AG04449 (cell line): ENCODE measurements at regions of chr7 and their contacts with region 1.

Region 1: GRCh38 chr7:151631968-151632749 is 112.5 kb upstream of the RHEB start:
- DNase-seq: no peak
- H3K4me3 ChIP-seq: peak overlapping the region; percentile 85
- CTCF ChIP-seq: peak; percentile 41

Region 2: GRCh38 chr7:151137076-151137675 is 495.0 kb before region 1 on chr7:
- CTCF ChIA-PET with region 1: no interaction called
- POLR2A ChIA-PET with region 1: no interaction called
- DNase-seq: no peak
- H3K4me3 ChIP-seq: no peak overlapping the region
- CTCF ChIP-seq: no peak

Region 3: GRCh38 chr7:151551820-151552219 is 80.3 kb before region 1 on chr7:
- CTCF ChIA-PET with region 1: no interaction called
- POLR2A ChIA-PET with region 1: no interaction called
- DNase-seq: no peak
- H3K4me3 ChIP-seq: no peak overlapping the region
- CTCF ChIP-seq: no peak

Region 4: GRCh38 chr7:151599401-151600227 is 32.5 kb before region 1 on chr7:
- CTCF ChIA-PET with region 1: interaction called, 22 read pairs
- POLR2A ChIA-PET with region 1: no interaction called
- DNase-seq: peak; percentile 80
- H3K4me3 ChIP-seq: peak overlapping the region; percentile 7; the same call in 1 of the 2 replicates
- CTCF ChIP-seq: no peak

Region 5: DNA sequence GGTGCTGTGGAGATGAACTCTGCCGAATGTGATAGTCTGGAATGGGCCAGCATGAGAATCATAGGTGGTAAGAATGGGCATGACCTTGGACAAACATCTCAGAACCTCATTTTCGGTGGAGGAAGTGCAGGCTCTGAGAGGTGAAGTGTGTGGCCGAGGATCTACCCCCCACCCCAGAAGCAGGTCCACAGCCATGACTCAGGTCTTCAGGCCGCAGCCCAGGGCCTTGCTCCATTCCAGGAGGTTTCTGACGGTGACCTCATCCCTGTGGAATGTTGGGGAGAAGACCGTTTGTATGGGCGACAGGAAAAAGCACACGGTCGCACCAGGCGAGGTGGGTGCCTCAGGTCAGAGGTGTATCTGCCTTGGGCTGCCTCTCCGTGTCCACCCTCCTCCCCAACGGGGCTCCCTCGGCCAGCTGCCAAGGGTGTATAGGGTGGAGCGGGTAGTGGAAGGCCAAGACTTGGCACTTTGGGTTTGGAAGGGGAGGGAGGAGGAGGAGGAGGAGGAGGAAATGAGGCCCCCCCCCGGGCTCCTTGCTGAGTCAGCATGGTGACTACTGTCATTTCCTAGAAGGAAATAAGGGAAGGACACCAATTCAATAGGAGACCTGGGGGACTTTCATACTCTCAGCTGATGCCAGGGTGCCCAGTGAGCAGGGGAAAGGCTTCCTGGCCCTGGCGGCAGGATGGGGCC is 55.5 kb after region 1 on chr7:
- CTCF ChIA-PET with region 1: interaction called, 18 read pairs
- POLR2A ChIA-PET with region 1: no interaction called
- DNase-seq: peak; percentile 79
- H3K4me3 ChIP-seq: peak overlapping the region; percentile 12; the same call in 1 of the 2 replicates
- CTCF ChIP-seq: no peak

Region 6: DNA sequence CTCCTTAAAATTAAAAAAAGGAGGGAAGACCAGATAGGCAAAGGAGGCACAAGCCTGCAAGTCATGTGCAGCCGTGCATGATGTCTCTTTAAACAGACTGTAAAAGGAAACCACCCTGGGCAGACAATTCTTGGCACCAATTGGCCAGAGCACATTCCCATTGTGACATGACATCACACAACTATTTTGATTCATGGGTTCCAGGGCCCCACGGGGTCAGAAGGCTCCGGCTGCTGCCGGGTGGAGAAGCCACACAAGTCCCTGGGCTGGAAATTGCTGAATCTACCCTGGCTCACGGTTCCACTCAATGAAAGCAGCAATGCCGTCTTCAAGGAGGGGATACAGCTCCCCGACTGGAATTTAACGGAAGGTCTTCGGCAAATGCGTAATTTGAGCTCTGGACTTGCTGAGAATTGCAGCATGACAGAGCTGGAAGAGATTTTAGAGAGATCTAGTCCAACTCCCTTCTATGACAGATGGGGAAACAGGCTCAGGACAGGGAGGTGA is 104.3 kb after region 1 on chr7:
- CTCF ChIA-PET with region 1: interaction called, 21 read pairs
- POLR2A ChIA-PET with region 1: interaction called, 3 read pairs
- DNase-seq: peak; percentile 87
- H3K4me3 ChIP-seq: peak overlapping the region; percentile 55
- CTCF ChIP-seq: peak; percentile 54

Region 7: GRCh38 chr7:151936207-151936606 is 304.0 kb after region 1 on chr7:
- CTCF ChIA-PET with region 1: no interaction called
- POLR2A ChIA-PET with region 1: no interaction called
- DNase-seq: no peak
- H3K4me3 ChIP-seq: no peak overlapping the region
- CTCF ChIP-seq: no peak